CD8-positive, alpha-beta T cell (primary cell): ENCODE measurements at regions of chr3 and their contacts with region 1.

Region 1: DNA sequence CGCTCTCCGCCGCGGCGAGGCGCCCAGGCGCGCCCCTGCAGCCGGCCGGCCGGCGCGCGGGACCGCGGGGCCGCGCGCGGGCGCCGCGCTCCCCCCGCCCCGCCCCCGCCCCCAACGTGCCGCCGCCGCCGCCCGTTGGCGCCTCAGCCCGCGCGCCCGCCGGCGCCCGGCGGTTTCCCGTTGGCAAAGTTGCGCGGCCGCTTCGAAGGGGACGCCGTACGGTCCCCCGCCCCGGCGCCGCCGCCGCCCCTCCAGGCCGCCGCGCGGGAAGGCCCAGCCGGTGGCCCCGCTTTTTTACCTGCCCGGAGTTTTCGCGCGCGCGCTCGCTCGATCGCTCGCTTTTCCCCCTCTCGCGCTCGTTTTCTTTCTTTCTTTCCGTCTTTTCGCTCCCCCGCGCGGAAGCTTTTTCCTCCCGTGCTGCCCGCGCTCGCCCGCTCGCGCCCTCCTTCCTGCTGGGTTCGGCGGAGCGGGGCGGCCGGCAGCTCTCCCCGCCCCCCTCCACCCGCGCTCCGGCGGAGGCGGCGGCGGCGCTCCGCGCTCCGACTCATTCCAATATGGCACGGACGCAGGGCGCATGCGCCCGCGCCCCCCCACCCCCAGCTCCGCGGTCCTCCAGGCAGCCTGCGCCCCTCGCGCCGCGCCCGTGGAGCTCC is at the start of gene SFMBT1:
- DNase-seq: peak; percentile 52 to 91 (median 78)
- ATAC-seq: peak; percentile 49
- H3K4me3 ChIP-seq: peak within 1 kb of the TSS; percentile 85 to 88
- H3K4me3 Mint-ChIP-seq: peak within 1 kb of the TSS; percentile 98
- H3K27ac ChIP-seq: peak within 1 kb of the TSS; percentile 81 to 83
- H3K27ac Mint-ChIP-seq: peak within 1 kb of the TSS; percentile 99
- H3K4me1 ChIP-seq: peaks cover 37% of the 10 kb centered on the region
- H3K4me1 Mint-ChIP-seq: peaks cover 35% of the 10 kb centered on the region
- H3K27me3 ChIP-seq: no peaks in the 10 kb centered on the region
- H3K27me3 Mint-ChIP-seq: no peaks in the 10 kb centered on the region
- CTCF ChIP-seq: no peak
- total RNA-seq, gene SFMBT1: 23.6 to 26.2 TPM

Region 2: DNA sequence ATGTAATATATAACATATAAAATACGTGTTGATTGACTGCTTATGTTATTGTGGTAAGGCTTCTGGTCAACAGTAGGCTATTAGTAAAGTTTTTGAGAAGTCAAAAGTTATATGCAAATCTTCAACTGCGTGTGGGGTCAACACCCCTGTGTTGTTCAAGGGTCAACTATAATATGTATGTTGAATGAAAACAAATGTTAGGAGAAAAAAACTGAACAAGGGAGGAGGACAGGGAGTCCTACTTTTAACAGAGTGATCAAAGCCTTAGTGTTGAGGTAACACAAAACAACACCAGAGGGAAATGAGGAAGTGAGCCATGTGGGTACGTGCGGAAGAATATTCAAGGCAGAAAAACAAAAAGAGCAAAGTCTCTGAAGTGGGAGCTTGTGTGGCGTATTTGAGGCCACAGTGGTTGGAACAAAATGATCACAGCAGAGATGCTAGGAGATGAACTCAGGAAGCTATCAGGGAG is 62.3 kb before region 1 on chr3:
- CTCF ChIA-PET with region 1: interaction called, 14 read pairs
- POLR2A ChIA-PET with region 1: interaction called, 9 read pairs
- intact Hi-C with region 1: loop called (anchors 1 kb)
- DNase-seq: peak; percentile 10 to 84 (median 58)
- ATAC-seq: peak; percentile 86
- H3K4me3 ChIP-seq: no peak overlapping the region
- H3K4me3 Mint-ChIP-seq: peak overlapping the region; percentile 68
- H3K27ac ChIP-seq: peak overlapping the region; percentile 26 to 66
- H3K27ac Mint-ChIP-seq: peak overlapping the region; percentile 87
- H3K4me1 ChIP-seq: peaks cover 38% of the 10 kb centered on the region
- H3K4me1 Mint-ChIP-seq: peaks cover 46% of the 10 kb centered on the region
- H3K27me3 ChIP-seq: no peaks in the 10 kb centered on the region
- H3K27me3 Mint-ChIP-seq: no peaks in the 10 kb centered on the region
- CTCF ChIP-seq: no peak

Region 3: GRCh38 chr3:53026382-53027162 is 19.1 kb before region 1 on chr3:
- CTCF ChIA-PET with region 1: interaction called, 6 read pairs
- POLR2A ChIA-PET with region 1: interaction called, 4 read pairs
- intact Hi-C with region 1: loop called in 1 of 2 experiments (anchors 2 kb)
- DNase-seq: peak in 2 of 9 experiments; percentile 12 to 22
- ATAC-seq: peak; percentile 60
- H3K4me3 ChIP-seq: no peak overlapping the region
- H3K4me3 Mint-ChIP-seq: no peak overlapping the region
- H3K27ac ChIP-seq: no peak overlapping the region
- H3K27ac Mint-ChIP-seq: no peak overlapping the region
- H3K4me1 ChIP-seq: peaks cover 48% of the 10 kb centered on the region
- H3K4me1 Mint-ChIP-seq: peaks cover 59% of the 10 kb centered on the region
- H3K27me3 ChIP-seq: no peaks in the 10 kb centered on the region
- H3K27me3 Mint-ChIP-seq: no peaks in the 10 kb centered on the region
- CTCF ChIP-seq: no peak